ENCODE measurements at regions of chr3 and their contacts with region 1.

Region 1: GRCh38 chr3:194344012-194344411 is 7.1 kb downstream of the CPN2 start:
- DNase-seq: peak; percentile 86
- H3K4me3 ChIP-seq: no peak overlapping the region
- H3K27ac ChIP-seq: no peak overlapping the region
- H3K4me1 ChIP-seq: no peaks in the 10 kb centered on the region
- H3K27me3 ChIP-seq: peaks cover 0 to 8% (median 0%) of the 10 kb centered on the region in 3 donors
- CTCF ChIP-seq: peak; percentile 72 to 98 (median 80)
- EP300 ChIP-seq: no peak
- POLR2A ChIP-seq: no peak

Region 2: DNA sequence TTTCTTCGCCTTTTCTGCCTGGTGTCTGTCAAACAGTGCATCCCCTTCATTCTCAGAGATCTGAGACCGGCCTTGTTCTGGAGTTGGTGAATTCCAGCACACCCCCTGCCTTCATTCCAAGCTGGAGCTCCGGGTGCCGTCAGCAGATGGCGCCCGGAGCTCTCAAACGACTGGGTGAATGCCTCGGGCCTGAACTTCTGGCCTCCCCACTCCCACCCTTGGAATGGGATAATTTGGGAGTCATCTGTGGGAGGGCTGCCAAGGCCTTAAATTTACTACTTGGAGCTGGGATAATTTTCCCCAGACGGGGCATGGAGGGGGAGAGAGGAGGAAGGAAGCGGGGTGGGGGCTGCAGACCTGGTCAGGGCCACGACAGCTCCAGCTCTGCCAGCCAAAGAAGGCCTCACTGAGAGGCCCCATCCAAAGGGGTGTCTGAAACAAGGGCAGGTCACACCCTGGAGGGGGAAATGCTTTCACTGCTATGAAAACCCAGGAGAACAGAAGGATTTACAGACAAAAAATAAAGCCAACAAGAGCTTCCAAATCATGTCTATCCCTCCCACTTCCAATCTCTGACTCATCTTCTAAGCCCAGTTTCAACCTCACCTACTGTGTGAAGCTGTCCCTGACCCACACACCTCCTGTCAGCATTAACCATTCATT is 563.1 kb before region 1 on chr3:
- intact Hi-C with region 1: loop called (anchors 1 kb)
- DNase-seq: peak; percentile 88
- H3K4me3 ChIP-seq: no peak overlapping the region
- H3K27ac ChIP-seq: peak overlapping the region; percentile 30 to 68 (median 53)
- H3K4me1 ChIP-seq: peaks cover 0 to 16% (median 12%) of the 10 kb centered on the region in 4 donors
- H3K27me3 ChIP-seq: no peaks in the 10 kb centered on the region
- CTCF ChIP-seq: peak; percentile 70 to 89 (median 80)
- EP300 ChIP-seq: no peak
- POLR2A ChIP-seq: no peak

Region 3: GRCh38 chr3:194447161-194447560 is 103.1 kb after region 1 on chr3:
- intact Hi-C with region 1: no loop called
- DNase-seq: no peak
- H3K4me3 ChIP-seq: no peak overlapping the region
- H3K27ac ChIP-seq: no peak overlapping the region
- H3K4me1 ChIP-seq: no peaks in the 10 kb centered on the region
- H3K27me3 ChIP-seq: no peaks in the 10 kb centered on the region
- CTCF ChIP-seq: no peak
- EP300 ChIP-seq: no peak
- POLR2A ChIP-seq: no peak